ENCODE measurements at regions of chr4 and their contacts with region 1.

Region 1: GRCh38 chr4:109433205-109434006 is at the start of gene SEC24B:
- DNase-seq: peak; percentile 94
- ATAC-seq: peak; percentile 94
- total RNA-seq, gene SEC24B: 46.7 TPM

Region 2: GRCh38 chr4:109571494-109571893 is 138.1 kb after region 1 on chr4:
- intact Hi-C with region 1: no loop called
- DNase-seq: no peak
- ATAC-seq: no peak

Region 3: DNA sequence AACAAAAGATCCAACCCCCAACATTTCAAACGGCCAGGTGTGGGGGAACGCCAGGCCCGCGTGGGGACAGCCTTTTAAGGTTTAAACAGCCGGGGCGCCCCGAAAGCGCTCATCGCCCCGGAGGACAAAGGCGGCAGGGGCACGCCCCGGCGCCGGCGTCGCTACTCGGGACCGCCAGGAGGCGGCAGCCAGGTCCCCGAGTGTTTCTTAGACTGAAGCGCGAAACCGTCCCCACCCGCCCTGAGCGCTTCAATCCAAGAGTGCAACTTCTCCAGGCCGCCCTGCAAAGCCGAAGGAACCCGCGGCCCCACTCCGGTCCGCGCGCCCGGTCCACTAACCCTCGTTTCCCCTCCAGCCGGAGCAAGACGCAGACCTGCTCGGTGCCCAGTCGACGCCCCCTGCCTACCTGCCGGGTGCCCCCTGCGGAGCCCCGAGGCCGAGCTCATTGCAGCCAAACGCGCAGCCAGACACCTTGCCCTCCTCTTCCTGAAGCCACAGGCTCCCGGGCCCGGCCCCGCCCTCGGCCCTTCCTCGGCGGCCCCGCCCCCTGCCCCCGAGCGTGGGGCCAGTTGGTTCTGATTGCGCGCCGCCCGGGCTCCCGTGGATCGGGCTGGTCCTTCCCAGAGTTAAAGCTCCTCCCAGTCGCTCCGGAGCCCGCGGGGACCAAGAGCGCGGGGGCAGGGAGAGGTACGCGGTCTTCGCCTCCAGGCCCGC is 269.7 kb after region 1 on chr4 and contains the start of gene CASP6:
- intact Hi-C with region 1: loop called (anchors 10 kb)
- DNase-seq: peak; percentile 90
- ATAC-seq: peak; percentile 98
- total RNA-seq, gene CASP6: 15.3 TPM

Region 4: DNA sequence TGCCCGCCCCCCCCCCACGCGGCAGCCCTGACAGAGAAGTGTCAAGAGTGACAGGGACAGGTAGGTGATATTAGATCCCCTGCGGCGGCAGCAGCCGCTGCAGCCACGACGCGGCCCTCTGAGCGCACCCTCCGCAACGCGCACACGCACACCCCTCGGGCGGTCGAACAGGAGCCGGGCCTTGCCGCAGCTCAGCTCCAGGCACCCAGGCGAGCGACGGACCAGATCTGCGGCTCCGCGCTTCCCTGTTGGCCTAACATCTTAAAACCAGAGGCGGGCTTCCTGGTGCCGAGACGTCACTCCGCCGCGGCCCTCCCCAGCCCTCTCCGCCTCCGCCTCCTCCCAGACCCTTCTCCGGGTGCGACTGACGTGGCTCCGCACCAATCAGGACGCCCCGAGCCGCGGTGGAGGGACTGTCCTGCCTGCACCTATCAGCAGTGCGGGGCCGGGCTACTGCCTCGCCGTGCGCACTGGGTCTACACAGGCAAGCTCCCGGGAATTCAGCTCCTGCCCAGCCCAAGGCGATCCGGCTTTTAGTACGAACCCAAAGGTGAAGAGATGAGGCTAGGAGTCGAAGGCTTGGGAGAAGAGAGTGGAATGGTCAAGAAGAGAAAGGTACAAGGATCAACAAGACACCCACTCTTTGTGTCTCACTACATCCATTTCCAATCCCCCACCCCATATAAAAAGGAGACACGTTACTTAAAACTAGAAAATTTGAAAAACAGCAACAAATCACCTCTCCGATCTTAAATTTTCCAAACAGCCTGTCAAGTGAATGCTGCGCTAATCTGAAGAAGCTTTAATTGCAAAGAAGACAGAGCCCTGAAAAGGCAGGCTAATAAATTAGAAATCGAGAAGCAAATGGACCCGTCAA is 1189.7 kb after region 1 on chr4 and contains the start of gene PITX2:
- intact Hi-C with region 1: no loop called
- DNase-seq: peak; percentile 75
- ATAC-seq: peak; percentile 70
- total RNA-seq, gene PITX2: not detected

Measured in sciatic nerve (tissue), 2 donors.